Activated CD4-positive, alpha-beta T cell treated with anti-CD3 and anti-CD28 coated beads, Interleukin-2, amount 10 ng/mL, durations not matched to agents 24 days and 14 days (primary cell): ENCODE measurements at regions of chr1 and their contacts with region 1.

Region 1: GRCh38 chr1:206469933-206470691 is at the start of gene IKBKE:
- DNase-seq: peak; percentile 89
- H3K4me3 Mint-ChIP-seq: peak within 1 kb of the TSS; percentile 86
- H3K27ac Mint-ChIP-seq: peak within 1 kb of the TSS; percentile 86
- H3K4me1 Mint-ChIP-seq: peaks cover 83% of the 10 kb centered on the region
- H3K27me3 Mint-ChIP-seq: no peaks in the 10 kb centered on the region
- total RNA-seq, gene IKBKE: 50.0 and 51.5 TPM in 2 replicates

Region 2: GRCh38 chr1:205485338-205486228 is 984.5 kb before region 1 on chr1:
- intact Hi-C with region 1: no loop called
- DNase-seq: peak; percentile 91
- H3K4me3 Mint-ChIP-seq: no peak overlapping the region
- H3K27ac Mint-ChIP-seq: no peak overlapping the region
- H3K4me1 Mint-ChIP-seq: peaks cover 13% of the 10 kb centered on the region
- H3K27me3 Mint-ChIP-seq: peaks cover 50% of the 10 kb centered on the region

Region 3: DNA sequence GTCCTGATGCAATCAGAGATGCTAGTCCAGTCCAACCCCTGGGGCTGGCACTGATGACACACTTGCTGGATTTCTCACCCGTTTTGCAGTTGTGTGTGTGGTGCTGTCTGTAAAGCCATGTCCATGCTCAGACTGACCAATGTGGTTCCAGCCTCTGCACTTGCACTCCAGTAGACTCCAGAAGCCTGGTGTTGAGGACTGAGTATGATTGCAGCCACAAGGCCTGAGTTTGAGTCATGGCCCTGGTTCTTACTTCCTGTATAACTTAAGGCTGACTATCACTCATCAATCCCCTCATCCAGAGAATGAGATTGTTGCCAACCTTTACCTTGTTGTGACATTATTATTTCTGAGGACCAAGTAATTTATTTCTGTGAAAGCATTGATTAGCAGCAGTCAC is 34.7 kb before region 1 on chr1:
- intact Hi-C with region 1: no loop called
- DNase-seq: no peak
- H3K4me3 Mint-ChIP-seq: no peak overlapping the region
- H3K27ac Mint-ChIP-seq: peak overlapping the region; percentile 8
- H3K4me1 Mint-ChIP-seq: peaks cover 3% of the 10 kb centered on the region
- H3K27me3 Mint-ChIP-seq: no peaks in the 10 kb centered on the region

Region 4: GRCh38 chr1:206556750-206557635 is 86.9 kb after region 1 on chr1:
- intact Hi-C with region 1: loop called (anchors 2 kb)
- DNase-seq: peak; percentile 97
- H3K4me3 Mint-ChIP-seq: peak overlapping the region; percentile 98
- H3K27ac Mint-ChIP-seq: peak overlapping the region; percentile 93
- H3K4me1 Mint-ChIP-seq: peaks cover 69% of the 10 kb centered on the region
- H3K27me3 Mint-ChIP-seq: no peaks in the 10 kb centered on the region